ENCODE measurements at regions of chr14 and their contacts with region 1.

Region 1: DNA sequence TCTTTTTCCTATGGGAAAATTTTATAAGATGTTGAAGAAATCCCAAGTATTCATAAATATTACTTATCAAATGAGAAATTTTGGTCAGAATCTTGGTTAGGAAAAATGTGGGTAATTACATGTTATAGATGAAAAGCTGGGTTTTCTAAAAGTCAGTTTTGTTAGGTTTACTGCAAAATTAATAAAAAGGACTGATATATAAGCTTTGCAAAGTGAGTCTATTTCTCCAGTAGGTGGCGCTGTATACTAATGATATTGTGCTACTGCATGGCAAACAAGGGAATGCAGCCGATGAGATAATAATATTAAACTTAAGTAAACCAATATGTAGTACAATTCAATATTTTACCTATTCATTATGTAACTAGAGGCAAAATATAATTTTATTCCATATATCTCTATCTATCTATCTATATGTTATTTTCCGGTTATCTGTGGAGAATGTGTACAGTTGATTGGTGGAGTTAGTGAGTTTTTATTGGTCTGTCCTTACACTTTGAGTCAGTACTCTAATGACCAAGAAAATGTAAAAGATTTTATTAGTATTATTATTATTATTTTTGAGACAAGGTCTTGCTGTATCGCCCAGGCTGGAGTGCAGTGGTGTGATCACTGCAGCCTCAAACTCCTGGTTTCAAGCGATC is 32.9 kb downstream of the MIPOL1 start:
- H3K4me3 ChIP-seq: no peak overlapping the region
- H3K27ac ChIP-seq: no peak overlapping the region
- H3K4me1 ChIP-seq: no peaks in the 10 kb centered on the region
- CTCF ChIP-seq: 0 out of 2 replicates have a peak, but pooled peaks have one; percentile 13

Region 2: GRCh38 chr14:37197421-37198272 is 33.0 kb before region 1 on chr14 and contains the start of gene MIPOL1:
- CTCF ChIA-PET with region 1: interaction called, 14 read pairs
- POLR2A ChIA-PET with region 1: no interaction called
- H3K4me3 ChIP-seq: peak within 1 kb of the TSS; percentile 75
- H3K27ac ChIP-seq: peak within 1 kb of the TSS; percentile 87
- H3K4me1 ChIP-seq: peaks cover 7% of the 10 kb centered on the region; the same call in 1 of the 2 replicates
- CTCF ChIP-seq: peak; percentile 72

Region 3: GRCh38 chr14:37241198-37241597 is 10.5 kb after region 1 on chr14:
- CTCF ChIA-PET with region 1: interaction called, 17 read pairs
- POLR2A ChIA-PET with region 1: no interaction called
- H3K4me3 ChIP-seq: no peak overlapping the region
- H3K27ac ChIP-seq: no peak overlapping the region
- H3K4me1 ChIP-seq: no peaks in the 10 kb centered on the region
- CTCF ChIP-seq: no peak

Region 4: DNA sequence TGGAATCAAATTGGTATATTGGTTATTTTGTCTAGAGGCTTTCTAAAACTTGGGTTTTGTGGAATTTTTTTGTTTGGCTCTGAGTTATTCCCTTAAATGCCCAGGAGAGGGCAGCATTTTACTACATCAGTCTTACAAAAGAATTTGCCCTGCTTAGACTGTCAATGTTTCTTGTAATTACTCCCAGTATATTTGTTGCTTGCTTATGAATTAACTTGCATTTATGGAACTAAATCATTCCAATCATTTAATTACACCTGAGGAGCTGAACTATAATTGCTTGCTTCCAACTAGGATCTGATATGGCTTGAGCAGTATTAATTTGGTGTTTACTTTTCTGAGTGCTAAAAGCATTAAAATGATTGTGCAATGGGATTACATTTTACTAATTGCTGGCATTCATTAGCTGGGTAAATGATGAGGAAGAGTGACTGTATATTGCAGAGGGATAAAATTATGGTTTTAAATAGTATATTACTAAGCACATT is 15.8 kb after region 1 on chr14:
- CTCF ChIA-PET with region 1: interaction called, 15 read pairs
- POLR2A ChIA-PET with region 1: no interaction called
- H3K4me3 ChIP-seq: no peak overlapping the region
- H3K27ac ChIP-seq: no peak overlapping the region
- H3K4me1 ChIP-seq: no peaks in the 10 kb centered on the region
- CTCF ChIP-seq: 0 out of 2 replicates have a peak, but pooled peaks have one; percentile 12

Region 5: GRCh38 chr14:37559386-37559785 is 328.7 kb after region 1 on chr14:
- CTCF ChIA-PET with region 1: no interaction called
- POLR2A ChIA-PET with region 1: no interaction called
- H3K4me3 ChIP-seq: no peak overlapping the region
- H3K27ac ChIP-seq: no peak overlapping the region
- H3K4me1 ChIP-seq: no peaks in the 10 kb centered on the region
- CTCF ChIP-seq: no peak

Measured in HEK293 (cell line).